ENCODE measurements at regions of chr10 and their contacts with region 1.

Region 1: DNA sequence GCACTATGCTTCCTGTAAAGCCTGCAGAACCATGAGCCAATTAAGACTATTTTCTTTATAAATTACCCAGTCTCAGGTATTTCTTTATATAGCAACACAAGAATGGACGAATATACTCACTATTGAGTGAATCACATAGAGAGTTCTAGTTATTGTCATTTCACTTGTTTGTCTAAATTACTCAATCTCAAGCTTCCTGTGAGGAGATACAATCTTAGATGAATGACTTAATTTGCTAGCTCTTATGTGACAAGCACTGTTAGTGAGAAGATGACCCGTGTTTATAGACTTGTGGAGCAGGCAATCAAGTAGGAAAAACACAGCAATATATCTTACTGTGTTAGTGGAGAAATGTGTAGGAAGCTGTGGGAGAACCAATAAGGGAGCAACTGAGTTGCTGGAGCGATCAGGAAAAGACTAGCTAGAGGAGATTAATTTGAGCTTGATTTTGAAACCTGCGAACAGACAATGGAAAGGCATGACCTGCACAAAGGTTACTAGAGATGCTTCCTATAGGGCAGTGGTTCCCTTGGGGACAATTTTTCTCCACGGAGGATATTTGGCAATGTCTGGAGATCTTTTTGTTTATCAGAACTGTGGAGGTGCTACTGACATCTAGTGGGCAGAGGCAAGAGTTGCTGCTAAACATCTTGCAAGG is 481.1 kb downstream of the SH2D4B start:
- DNase-seq: peak; percentile 34
- H3K4me3 ChIP-seq: no peak overlapping the region
- H3K27ac ChIP-seq: no peak overlapping the region
- H3K4me1 ChIP-seq: no peaks in the 10 kb centered on the region
- H3K27me3 ChIP-seq: no peaks in the 10 kb centered on the region
- CTCF ChIP-seq: peak; percentile 60 to 81

Region 2: GRCh38 chr10:80699602-80700039 is 319.2 kb before region 1 on chr10:
- CTCF ChIA-PET with region 1: no interaction called
- dilution Hi-C with region 1: no loop called
- in situ Hi-C with region 1: no loop called
- intact Hi-C with region 1: loop called (anchors 1 kb)
- DNase-seq: peak; percentile 40
- H3K4me3 ChIP-seq: no peak overlapping the region
- H3K27ac ChIP-seq: no peak overlapping the region
- H3K4me1 ChIP-seq: no peaks in the 10 kb centered on the region
- H3K27me3 ChIP-seq: no peaks in the 10 kb centered on the region
- CTCF ChIP-seq: peak; percentile 74 to 89

Region 3: GRCh38 chr10:80855348-80855971 is 163.4 kb before region 1 on chr10:
- CTCF ChIA-PET with region 1: no interaction called
- dilution Hi-C with region 1: no loop called
- in situ Hi-C with region 1: no loop called
- intact Hi-C with region 1: loop called (anchors 5 kb)
- DNase-seq: no peak
- H3K4me3 ChIP-seq: no peak overlapping the region
- H3K27ac ChIP-seq: no peak overlapping the region
- H3K4me1 ChIP-seq: no peaks in the 10 kb centered on the region
- H3K27me3 ChIP-seq: peaks cover 3% of the 10 kb centered on the region
- CTCF ChIP-seq: peak in 1 of 2 donors; percentile 42

Region 4: GRCh38 chr10:81068460-81068859 is 49.6 kb after region 1 on chr10:
- CTCF ChIA-PET with region 1: no interaction called
- dilution Hi-C with region 1: no loop called
- in situ Hi-C with region 1: no loop called
- intact Hi-C with region 1: no loop called
- DNase-seq: no peak
- H3K4me3 ChIP-seq: no peak overlapping the region
- H3K27ac ChIP-seq: no peak overlapping the region
- H3K4me1 ChIP-seq: no peaks in the 10 kb centered on the region
- H3K27me3 ChIP-seq: no peaks in the 10 kb centered on the region
- CTCF ChIP-seq: no peak

Measured in mammary epithelial cell (primary cell).